Activated CD8-positive, alpha-beta memory T cell treated with anti-CD3 and anti-CD28 coated beads, Interleukin-2, amount 10 ng/mL, durations not matched to agents 7 days and 5 days (primary cell): ENCODE measurements at regions of chr1 and their contacts with region 1.

Region 1: GRCh38 chr1:23344111-23344986 is at the start of gene HNRNPR:
- DNase-seq: peak; percentile 100
- ATAC-seq: peak; percentile 97
- H3K4me3 Mint-ChIP-seq: peak within 1 kb of the TSS; percentile 85
- H3K27ac Mint-ChIP-seq: peak within 1 kb of the TSS; percentile 94
- H3K4me1 Mint-ChIP-seq: peaks cover 34% of the 10 kb centered on the region
- H3K27me3 Mint-ChIP-seq: no peaks in the 10 kb centered on the region
- total RNA-seq, gene HNRNPR: 220 to 222 TPM

Region 2: DNA sequence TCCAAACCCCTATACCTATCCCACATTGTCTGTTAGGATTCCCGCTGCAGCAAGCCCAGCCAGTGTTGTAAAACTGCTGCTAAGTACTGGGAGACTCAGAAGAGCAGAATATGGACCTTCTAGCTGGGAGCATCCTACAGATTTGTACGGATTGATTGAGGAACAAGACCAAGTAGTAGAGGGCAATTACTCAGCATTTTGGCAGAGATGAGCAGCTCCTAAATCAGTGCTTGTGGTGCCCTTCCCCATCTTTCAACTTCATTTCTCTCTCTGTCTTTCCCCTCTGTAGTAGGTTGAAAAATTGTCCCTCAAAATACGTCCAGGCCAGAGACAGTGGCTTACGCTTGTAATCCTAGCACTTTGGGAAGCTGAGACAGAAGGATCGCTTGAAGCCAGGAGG is 89.8 kb before region 1 on chr1:
- CTCF ChIA-PET with region 1: no interaction called
- DNase-seq: no peak
- ATAC-seq: no peak
- H3K4me3 Mint-ChIP-seq: no peak overlapping the region
- H3K27ac Mint-ChIP-seq: no peak overlapping the region
- H3K4me1 Mint-ChIP-seq: no peaks in the 10 kb centered on the region
- H3K27me3 Mint-ChIP-seq: peaks cover 9% of the 10 kb centered on the region

Region 3: DNA sequence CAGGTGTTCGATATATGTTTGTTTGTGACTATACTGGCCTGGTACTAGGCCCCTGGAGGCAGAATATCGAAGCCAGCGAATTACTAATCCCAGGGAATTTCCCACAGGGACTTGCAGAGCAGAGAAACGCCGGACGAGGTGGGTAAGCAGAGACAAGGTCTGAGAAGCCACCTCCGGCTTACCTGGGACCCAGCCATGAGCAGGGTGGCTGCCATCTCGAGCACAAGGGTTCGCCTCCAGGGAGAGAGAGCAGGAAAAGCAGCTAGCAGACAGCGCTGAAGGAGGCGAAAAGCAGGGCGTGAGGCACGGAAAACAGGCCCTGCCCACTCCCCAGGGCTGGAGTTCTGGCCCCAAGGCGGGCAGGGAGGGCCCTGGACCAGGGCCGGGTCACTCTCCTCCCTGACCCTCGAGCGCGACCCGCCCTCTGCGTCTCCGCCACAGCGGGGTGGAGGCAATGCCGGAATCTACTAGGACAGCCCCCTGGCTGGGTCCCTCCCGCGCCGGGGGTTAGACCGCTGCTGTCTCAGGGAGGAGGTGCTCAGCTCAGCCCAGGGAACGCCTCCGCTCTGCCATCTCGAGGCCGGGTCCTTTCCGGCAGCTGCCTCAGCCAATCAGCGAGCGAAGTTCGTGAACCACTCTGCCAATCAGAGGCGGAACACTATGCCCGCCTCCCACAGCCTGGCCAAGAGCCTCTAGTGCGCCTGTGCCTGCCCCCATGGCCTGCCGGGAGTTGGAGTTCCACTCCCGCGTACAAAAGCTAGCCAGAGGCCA is 23.6 kb after region 1 on chr1:
- CTCF ChIA-PET with region 1: interaction called, 16 read pairs
- DNase-seq: peak; percentile 99
- ATAC-seq: peak; percentile 93
- H3K4me3 Mint-ChIP-seq: peak overlapping the region; percentile 91
- H3K27ac Mint-ChIP-seq: peak overlapping the region; percentile 98
- H3K4me1 Mint-ChIP-seq: peaks cover 30% of the 10 kb centered on the region
- H3K27me3 Mint-ChIP-seq: no peaks in the 10 kb centered on the region